Spleen (tissue), 13 donors: ENCODE measurements at regions of chr5 and their contacts with region 1.

Region 1: GRCh38 chr5:14264604-14265316 is 121.6 kb downstream of the TRIO start:
- DNase-seq: peak; percentile 96
- H3K4me3 ChIP-seq: peak overlapping the region in 3 of 8 donors; percentile 15 to 49 (median 20)
- H3K27ac ChIP-seq: peak overlapping the region in 5 of 8 donors; percentile 24 to 45 (median 26)
- H3K4me1 ChIP-seq: peaks cover 21 to 73% (median 42%) of the 10 kb centered on the region in 6 donors
- H3K27me3 ChIP-seq: no peaks in the 10 kb centered on the region
- CTCF ChIP-seq: no peak
- POLR2A ChIP-seq: no peak

Region 2: GRCh38 chr5:13660072-13660471 is 604.7 kb before region 1 on chr5:
- intact Hi-C with region 1: no loop called
- DNase-seq: no peak
- H3K4me3 ChIP-seq: no peak overlapping the region
- H3K27ac ChIP-seq: no peak overlapping the region
- H3K4me1 ChIP-seq: no peaks in the 10 kb centered on the region
- H3K27me3 ChIP-seq: no peaks in the 10 kb centered on the region
- CTCF ChIP-seq: no peak
- POLR2A ChIP-seq: no peak

Region 3: DNA sequence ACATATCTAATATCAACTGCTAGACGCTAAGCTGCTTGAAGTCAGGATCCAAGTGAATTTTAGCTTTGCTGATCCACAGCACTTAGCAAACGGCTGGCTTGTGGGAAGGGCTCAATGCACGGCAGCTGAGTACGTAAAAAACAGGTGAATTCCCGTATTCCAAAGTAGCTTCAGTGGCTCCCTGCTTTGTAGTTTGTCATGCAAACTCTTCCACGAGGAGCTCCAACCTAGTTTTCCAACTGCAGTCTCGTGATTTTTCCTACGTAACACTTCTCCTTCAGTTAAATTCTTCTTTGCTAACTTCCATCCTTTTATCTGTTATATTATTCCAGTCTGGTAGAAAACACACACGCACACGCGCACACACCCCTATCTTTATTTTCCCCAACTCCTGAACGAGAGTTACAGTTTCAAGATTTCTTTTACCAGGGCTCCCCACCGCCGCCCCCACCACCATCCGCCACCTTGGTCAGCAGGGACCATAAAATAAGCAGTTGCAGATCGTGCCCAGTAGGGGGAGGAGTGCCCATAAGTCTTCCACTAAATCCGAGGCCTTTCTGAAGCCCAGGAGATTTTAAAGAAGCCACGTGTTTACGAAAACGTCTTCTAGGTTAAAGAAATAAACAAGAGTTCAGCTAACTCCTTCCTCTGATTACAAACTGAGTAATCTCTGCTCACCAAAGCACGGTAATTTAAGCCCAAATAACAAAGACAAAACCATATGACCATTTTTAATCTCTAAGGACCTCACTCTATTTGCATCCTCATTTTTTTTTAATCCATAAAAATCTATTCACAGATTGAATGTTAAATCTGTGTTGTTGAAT is 156.4 kb before region 1 on chr5:
- intact Hi-C with region 1: loop called (anchors 5 kb)
- DNase-seq: no peak
- H3K4me3 ChIP-seq: peak overlapping the region in 2 of 8 donors; percentile 24 to 50
- H3K27ac ChIP-seq: no peak overlapping the region
- H3K4me1 ChIP-seq: peaks cover 0 to 24% (median 8%) of the 10 kb centered on the region in 6 donors
- H3K27me3 ChIP-seq: peaks cover 0 to 9% (median 0%) of the 10 kb centered on the region in 7 donors
- CTCF ChIP-seq: peak; percentile 37 to 81 (median 74)
- POLR2A ChIP-seq: no peak

Region 4: GRCh38 chr5:14142827-14143548 is 121.8 kb before region 1 on chr5 and contains the start of gene TRIO:
- intact Hi-C with region 1: loop called (anchors 10 kb)
- DNase-seq: peak; percentile 95
- H3K4me3 ChIP-seq: peak within 1 kb of the TSS; percentile 62 to 97 (median 78)
- H3K27ac ChIP-seq: peak within 1 kb of the TSS; percentile 83 to 97 (median 92)
- H3K4me1 ChIP-seq: peaks cover 5 to 52% (median 34%) of the 10 kb centered on the region in 6 donors
- H3K27me3 ChIP-seq: peaks cover 0 to 15% (median 0%) of the 10 kb centered on the region in 7 donors
- CTCF ChIP-seq: peak in 9 of 11 experiments; percentile 22 to 70 (median 57)
- POLR2A ChIP-seq: no peak
- total RNA-seq, gene TRIO: 139 to 280 (median 214) TPM

Region 5: GRCh38 chr5:14174230-14174637 is 90.5 kb before region 1 on chr5:
- intact Hi-C with region 1: no loop called
- DNase-seq: no peak
- H3K4me3 ChIP-seq: peak overlapping the region in 2 of 8 donors; percentile 6 to 38
- H3K27ac ChIP-seq: peak overlapping the region in 5 of 8 donors; percentile 32 to 74 (median 57)
- H3K4me1 ChIP-seq: peaks cover 19 to 89% (median 68%) of the 10 kb centered on the region in 6 donors
- H3K27me3 ChIP-seq: no peaks in the 10 kb centered on the region
- CTCF ChIP-seq: no peak
- POLR2A ChIP-seq: no peak

Region 6: GRCh38 chr5:14212838-14213237 is 51.9 kb before region 1 on chr5:
- intact Hi-C with region 1: loop called (anchors 10 kb)
- DNase-seq: no peak
- H3K4me3 ChIP-seq: peak overlapping the region in 1 of 8 donors; percentile 3
- H3K27ac ChIP-seq: peak overlapping the region in 6 of 8 donors; percentile 30 to 78 (median 62)
- H3K4me1 ChIP-seq: peaks cover 7 to 84% (median 66%) of the 10 kb centered on the region in 6 donors
- H3K27me3 ChIP-seq: no peaks in the 10 kb centered on the region
- CTCF ChIP-seq: no peak
- POLR2A ChIP-seq: no peak